CD8-positive, alpha-beta memory T cell (primary cell): ENCODE measurements at regions of chr16 and their contacts with region 1.

Region 1: DNA sequence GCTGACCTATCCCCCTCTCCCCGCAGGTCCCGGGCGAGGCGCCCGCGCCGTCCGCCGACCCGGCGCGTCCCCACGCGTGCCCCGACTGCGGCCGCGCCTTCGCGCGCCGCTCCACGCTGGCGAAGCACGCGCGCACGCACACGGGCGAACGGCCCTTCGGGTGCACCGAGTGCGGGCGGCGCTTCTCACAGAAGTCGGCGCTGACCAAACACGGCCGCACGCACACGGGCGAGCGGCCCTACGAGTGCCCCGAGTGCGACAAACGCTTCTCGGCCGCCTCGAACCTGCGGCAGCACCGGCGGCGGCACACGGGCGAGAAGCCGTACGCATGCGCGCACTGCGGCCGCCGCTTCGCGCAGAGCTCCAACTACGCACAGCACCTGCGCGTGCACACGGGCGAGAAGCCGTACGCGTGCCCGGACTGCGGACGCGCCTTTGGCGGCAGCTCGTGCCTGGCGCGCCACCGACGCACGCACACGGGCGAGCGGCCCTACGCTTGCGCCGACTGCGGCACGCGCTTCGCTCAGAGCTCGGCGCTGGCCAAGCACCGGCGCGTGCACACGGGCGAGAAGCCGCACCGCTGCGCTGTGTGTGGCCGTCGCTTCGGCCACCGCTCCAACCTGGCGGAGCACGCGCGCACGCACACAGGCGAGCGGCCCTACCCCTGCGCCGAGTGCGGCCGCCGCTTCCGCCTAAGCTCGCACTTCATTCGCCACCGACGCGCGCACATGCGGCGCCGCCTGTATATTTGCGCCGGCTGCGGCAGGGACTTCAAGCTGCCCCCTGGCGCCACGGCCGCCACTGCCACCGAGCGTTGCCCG is 10.3 kb downstream of the ZNF771 start:
- DNase-seq: peak; percentile 80 to 93 (median 89)
- H3K4me3 ChIP-seq: peak overlapping the region; percentile 68
- H3K4me3 Mint-ChIP-seq: peak overlapping the region; percentile 58 to 86 (median 71)
- H3K27ac ChIP-seq: peak overlapping the region; percentile 65
- H3K27ac Mint-ChIP-seq: peak overlapping the region in 4 of 8 donors; percentile 68 to 88 (median 75)
- H3K4me1 ChIP-seq: peaks cover 11% of the 10 kb centered on the region
- H3K4me1 Mint-ChIP-seq: peaks cover 14 to 16% (median 14%) of the 10 kb centered on the region in 3 donors
- H3K27me3 ChIP-seq: no peaks in the 10 kb centered on the region
- H3K27me3 Mint-ChIP-seq: peaks cover 0 to 1% of the 10 kb centered on the region in 2 donors

Region 2: DNA sequence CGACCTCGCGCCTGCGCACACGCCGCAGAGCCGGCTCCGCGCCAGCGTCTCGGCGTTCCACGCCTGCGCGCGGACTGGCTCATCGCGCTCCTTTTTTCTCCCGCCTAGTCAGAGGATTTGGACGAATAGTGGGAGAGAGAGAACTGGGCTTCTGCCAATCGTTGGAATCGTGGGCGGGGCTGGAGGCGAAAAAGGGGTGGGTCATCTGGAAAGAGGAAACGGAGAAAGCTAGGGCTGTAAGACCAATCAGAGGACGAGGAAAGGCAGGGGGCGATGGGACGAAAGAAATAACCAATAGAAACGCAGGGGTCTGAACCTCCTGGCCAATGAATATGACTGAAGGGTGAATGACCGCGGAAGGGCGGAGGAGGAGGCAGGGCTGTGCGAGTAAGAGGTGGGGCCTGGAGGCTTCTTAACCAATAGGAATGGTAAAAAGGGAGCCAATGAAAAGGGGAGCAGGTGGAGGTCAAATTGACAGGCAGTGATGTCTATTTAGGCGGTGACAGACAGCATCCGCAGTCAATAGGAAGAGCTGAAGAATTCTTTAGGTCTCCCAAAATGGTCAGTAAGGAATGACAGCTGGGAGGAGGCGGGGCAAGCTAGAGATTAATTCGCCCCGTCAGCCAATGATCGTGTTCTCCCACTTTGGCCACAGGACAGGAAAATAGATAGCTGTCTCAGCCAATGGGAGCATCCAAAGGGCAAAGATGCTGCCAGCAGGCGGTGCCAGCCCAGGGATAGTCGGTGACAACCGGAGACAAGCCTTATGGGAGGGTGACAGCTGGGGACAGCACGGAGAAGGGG is 47.1 kb before region 1 on chr16 and contains the start of gene TBC1D10B:
- CTCF ChIA-PET with region 1: interaction called, 7 read pairs
- POLR2A ChIA-PET with region 1: interaction called, 17 read pairs
- DNase-seq: peak; percentile 96 to 100 (median 100)
- H3K4me3 ChIP-seq: peak within 1 kb of the TSS; percentile 88
- H3K4me3 Mint-ChIP-seq: peak within 1 kb of the TSS; percentile 83 to 91 (median 89)
- H3K27ac ChIP-seq: peak within 1 kb of the TSS; percentile 74
- H3K27ac Mint-ChIP-seq: peak within 1 kb of the TSS; percentile 67 to 97 (median 94)
- H3K4me1 ChIP-seq: peaks cover 36% of the 10 kb centered on the region
- H3K4me1 Mint-ChIP-seq: peaks cover 43 to 56% (median 47%) of the 10 kb centered on the region in 3 donors
- H3K27me3 ChIP-seq: no peaks in the 10 kb centered on the region
- H3K27me3 Mint-ChIP-seq: peaks cover 0 to 2% of the 10 kb centered on the region in 2 donors
- total RNA-seq, gene TBC1D10B: 59.0 to 61.4 TPM

Region 3: DNA sequence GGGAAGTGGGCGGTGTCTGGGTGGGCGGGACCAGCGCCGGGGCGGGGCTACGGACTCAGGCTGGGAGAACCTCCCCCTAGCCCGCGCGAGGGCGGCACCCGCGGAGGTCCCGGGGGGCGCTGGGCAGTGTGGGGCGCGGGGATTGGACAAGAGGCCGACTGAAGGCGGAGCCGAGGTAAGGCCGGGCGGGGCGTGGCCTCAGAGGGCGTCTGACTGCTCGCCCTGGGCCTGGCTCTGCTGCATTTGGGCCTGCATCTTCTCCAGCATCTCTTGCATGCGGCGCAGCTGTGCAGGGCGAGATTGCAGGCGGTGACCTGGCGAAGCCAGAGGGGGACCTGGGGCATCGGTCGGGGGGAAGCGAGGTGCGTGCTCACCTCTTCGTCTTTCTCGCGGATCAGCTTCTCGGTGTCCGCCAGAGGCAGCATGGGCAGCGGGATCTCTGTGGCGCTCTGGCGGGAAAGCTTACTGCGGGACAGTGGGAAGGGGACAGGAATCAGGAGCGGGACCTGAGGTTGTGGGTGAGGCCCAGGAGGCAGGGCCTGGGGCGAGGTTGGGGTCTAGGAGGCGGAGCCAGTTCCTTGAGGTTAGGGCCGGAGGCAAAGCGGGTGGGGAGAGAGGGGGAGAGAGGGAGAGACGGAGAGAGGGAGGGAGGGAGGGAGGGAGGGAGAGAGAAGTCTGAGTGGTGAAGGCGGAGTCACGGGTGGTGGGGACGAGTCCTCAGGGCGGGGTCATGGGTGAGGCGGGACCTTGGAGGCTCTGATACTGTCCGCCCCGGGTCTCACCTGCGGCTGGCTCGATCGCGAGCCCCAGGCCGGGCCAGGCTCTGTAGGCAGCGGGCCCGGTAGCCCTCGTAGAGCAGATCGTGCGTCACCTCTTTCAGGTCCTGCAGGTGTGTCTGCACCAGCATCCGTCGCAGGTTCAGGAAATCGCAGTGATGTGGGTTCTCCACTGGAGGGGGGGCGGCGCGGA is 39.2 kb before region 1 on chr16:
- CTCF ChIA-PET with region 1: interaction called, 4 read pairs
- POLR2A ChIA-PET with region 1: interaction called, 11 read pairs
- DNase-seq: peak; percentile 99 to 100 (median 99)
- H3K4me3 ChIP-seq: peak overlapping the region; percentile 99
- H3K4me3 Mint-ChIP-seq: peak overlapping the region; percentile 92 to 100 (median 96)
- H3K27ac ChIP-seq: peak overlapping the region; percentile 99
- H3K27ac Mint-ChIP-seq: peak overlapping the region; percentile 99 to 100 (median 100)
- H3K4me1 ChIP-seq: peaks cover 64% of the 10 kb centered on the region
- H3K4me1 Mint-ChIP-seq: peaks cover 55 to 63% (median 55%) of the 10 kb centered on the region in 3 donors
- H3K27me3 ChIP-seq: no peaks in the 10 kb centered on the region
- H3K27me3 Mint-ChIP-seq: peaks cover 0 to 2% of the 10 kb centered on the region in 2 donors

Region 4: DNA sequence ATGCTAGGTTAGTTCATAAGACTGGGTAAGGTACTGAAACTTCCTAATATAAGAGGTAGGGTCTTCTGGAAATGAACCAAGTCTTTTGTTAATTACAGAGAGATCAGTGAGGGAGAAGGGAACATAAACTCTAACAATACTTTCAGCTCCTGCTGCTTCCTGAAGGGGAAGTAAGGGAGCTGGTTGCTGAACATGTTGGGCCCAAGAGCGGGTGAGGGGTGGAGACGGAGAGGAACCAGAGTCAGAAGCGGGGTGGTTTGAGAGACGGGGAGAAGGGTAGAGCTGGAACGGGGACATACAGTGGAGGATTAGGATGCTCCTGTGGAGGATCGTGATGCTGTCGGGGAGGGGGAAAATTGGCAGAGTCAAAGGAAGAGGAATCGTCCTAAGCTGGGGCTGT is 128.4 kb after region 1 on chr16:
- CTCF ChIA-PET with region 1: no interaction called
- POLR2A ChIA-PET with region 1: no interaction called
- DNase-seq: no peak
- H3K4me3 ChIP-seq: no peak overlapping the region
- H3K4me3 Mint-ChIP-seq: peak overlapping the region in 1 of 7 donors; percentile 60
- H3K27ac ChIP-seq: no peak overlapping the region
- H3K27ac Mint-ChIP-seq: peak overlapping the region in 3 of 8 donors; percentile 19 to 56 (median 20)
- H3K4me1 ChIP-seq: peaks cover 3% of the 10 kb centered on the region
- H3K4me1 Mint-ChIP-seq: peaks cover 10 to 27% (median 16%) of the 10 kb centered on the region in 3 donors
- H3K27me3 ChIP-seq: no peaks in the 10 kb centered on the region
- H3K27me3 Mint-ChIP-seq: peaks cover 0 to 2% of the 10 kb centered on the region in 2 donors